Ascending aorta (tissue), 2 donors: ENCODE measurements at regions of chr19 and their contacts with region 1.

Region 1: GRCh38 chr19:1825909-1826556 is 14.0 kb upstream of the ATP8B3 start:
- DNase-seq: peak in 1 of 2 donors; percentile 83
- H3K4me3 ChIP-seq: no peak overlapping the region
- H3K27ac ChIP-seq: no peak overlapping the region
- H3K4me1 ChIP-seq: no peaks in the 10 kb centered on the region
- H3K27me3 ChIP-seq: no peaks in the 10 kb centered on the region
- CTCF ChIP-seq: peak; percentile 88 to 96 (median 94)

Region 2: DNA sequence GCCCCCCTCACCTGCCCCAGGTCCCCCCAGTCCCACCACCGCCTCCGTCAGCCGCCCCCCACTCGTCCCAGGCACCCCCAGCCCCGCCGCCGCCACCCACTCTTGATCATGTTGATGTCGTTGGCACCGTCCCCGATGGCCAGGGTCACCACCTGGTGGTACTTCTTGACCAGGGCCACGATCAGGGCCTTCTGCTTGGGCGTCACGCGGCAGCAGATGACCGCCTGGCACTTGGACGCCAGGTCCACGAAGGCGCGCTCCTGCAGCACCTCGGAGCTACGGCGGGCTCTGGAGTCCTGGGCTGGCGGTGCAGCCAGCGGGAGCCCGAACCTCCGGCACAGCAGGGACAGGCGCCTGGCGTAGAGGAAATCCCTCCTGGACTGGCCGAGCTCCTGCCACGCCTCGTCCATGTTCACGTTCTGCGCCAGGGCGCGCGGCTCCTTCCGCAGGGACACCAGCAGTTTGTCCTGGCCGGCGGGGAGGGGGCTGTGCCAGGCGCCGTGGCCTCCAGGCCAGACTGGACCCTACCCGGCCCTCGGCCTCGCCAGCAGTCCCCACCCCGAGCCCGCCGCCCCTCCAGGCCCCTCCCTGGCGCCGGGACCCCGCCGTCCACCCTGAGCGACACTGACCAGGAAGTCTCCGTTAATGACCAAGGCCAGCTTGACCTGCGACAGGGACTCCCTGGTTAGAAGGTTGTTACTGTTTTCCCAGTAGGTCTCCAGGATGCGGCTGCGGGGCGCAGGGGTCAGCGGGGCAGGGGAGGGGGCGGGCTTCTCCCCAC is 36.6 kb before region 1 on chr19:
- intact Hi-C with region 1: loop called (anchors 2 kb)
- DNase-seq: no peak
- H3K4me3 ChIP-seq: peak overlapping the region in 1 of 2 donors; percentile 46
- H3K27ac ChIP-seq: no peak overlapping the region
- H3K4me1 ChIP-seq: no peaks in the 10 kb centered on the region
- H3K27me3 ChIP-seq: peaks cover 8% of the 10 kb centered on the region
- CTCF ChIP-seq: no peak

Region 3: GRCh38 chr19:1901940-1902441 is 76.0 kb after region 1 on chr19:
- intact Hi-C with region 1: no loop called
- DNase-seq: peak in 1 of 2 donors; percentile 43
- H3K4me3 ChIP-seq: no peak overlapping the region
- H3K27ac ChIP-seq: peak overlapping the region; percentile 3 to 81
- H3K4me1 ChIP-seq: peaks cover 8 to 13% of the 10 kb centered on the region in 2 donors
- H3K27me3 ChIP-seq: no peaks in the 10 kb centered on the region
- CTCF ChIP-seq: no peak